Ovary (tissue), 10 donors: ENCODE measurements at regions of chr12 and their contacts with region 1.

Region 1: DNA sequence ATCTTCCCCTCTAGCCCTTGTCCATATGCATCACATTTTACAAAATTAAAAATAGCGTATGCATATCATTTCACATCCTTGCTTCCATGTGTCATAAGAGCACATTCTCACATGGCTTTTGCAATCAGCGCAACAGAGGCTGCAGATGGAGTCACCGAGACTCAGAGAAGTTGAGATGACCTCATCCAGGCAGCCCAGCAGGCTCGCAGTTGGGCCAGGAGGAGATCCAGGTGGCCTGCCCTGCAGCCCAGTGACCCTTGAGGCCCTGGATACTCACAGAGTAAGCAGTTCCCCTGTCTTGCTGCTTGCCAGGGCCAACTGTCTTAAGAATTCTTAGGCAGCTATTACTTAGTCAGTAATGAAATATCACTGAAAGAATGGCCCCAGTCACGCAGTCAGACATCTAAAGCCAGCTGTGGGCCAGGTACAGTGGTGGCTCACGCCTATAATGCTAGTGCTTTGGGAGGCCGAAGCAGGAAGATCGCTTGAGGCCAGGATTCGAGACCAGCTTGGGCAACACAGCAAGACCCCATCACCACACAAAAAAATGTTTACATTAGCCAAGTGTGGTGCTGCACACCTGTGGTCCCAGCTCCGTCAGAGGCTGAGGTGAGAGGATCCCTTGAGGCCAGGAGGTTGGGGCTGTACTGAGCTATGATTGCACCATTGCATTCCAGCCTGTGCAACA is 9.1 kb downstream of the CAMKK2 start:
- DNase-seq: peak in 1 of 5 donors; percentile 32
- H3K4me3 ChIP-seq: no peak overlapping the region
- H3K27ac ChIP-seq: no peak overlapping the region
- H3K4me1 ChIP-seq: peaks cover 31% of the 10 kb centered on the region
- H3K27me3 ChIP-seq: no peaks in the 10 kb centered on the region
- CTCF ChIP-seq: no peak
- EP300 ChIP-seq: no peak
- POLR2A ChIP-seq: no peak

Region 2: GRCh38 chr12:121240484-121241101 is 46.8 kb before region 1 on chr12:
- intact Hi-C with region 1: loop called in 1 of 4 experiments (anchors 5 kb)
- DNase-seq: peak; percentile 91 to 96 (median 93)
- H3K4me3 ChIP-seq: peak overlapping the region; percentile 16
- H3K27ac ChIP-seq: peak overlapping the region; percentile 66 to 85
- H3K4me1 ChIP-seq: peaks cover 9% of the 10 kb centered on the region
- H3K27me3 ChIP-seq: no peaks in the 10 kb centered on the region
- CTCF ChIP-seq: peak; percentile 13 to 50 (median 38)
- EP300 ChIP-seq: no peak
- POLR2A ChIP-seq: no peak